ENCODE measurements at regions of chr19 and their contacts with region 1.

Region 1: GRCh38 chr19:41706741-41707501 is 1.5 kb upstream of the CEACAM5 start:
- DNase-seq: peak; percentile 84 to 85
- H3K4me3 ChIP-seq: peak overlapping the region; percentile 26
- H3K4me3 Mint-ChIP-seq: peak overlapping the region; percentile 66
- H3K27ac Mint-ChIP-seq: no peak overlapping the region
- H3K4me1 ChIP-seq: no peaks in the 10 kb centered on the region; the same call in 1 of the 2 replicates
- H3K4me1 Mint-ChIP-seq: peaks cover 13% of the 10 kb centered on the region
- H3K27me3 ChIP-seq: no peaks in the 10 kb centered on the region
- H3K27me3 Mint-ChIP-seq: peaks cover 5% of the 10 kb centered on the region
- CTCF ChIP-seq: peak; percentile 85 to 99

Region 2: DNA sequence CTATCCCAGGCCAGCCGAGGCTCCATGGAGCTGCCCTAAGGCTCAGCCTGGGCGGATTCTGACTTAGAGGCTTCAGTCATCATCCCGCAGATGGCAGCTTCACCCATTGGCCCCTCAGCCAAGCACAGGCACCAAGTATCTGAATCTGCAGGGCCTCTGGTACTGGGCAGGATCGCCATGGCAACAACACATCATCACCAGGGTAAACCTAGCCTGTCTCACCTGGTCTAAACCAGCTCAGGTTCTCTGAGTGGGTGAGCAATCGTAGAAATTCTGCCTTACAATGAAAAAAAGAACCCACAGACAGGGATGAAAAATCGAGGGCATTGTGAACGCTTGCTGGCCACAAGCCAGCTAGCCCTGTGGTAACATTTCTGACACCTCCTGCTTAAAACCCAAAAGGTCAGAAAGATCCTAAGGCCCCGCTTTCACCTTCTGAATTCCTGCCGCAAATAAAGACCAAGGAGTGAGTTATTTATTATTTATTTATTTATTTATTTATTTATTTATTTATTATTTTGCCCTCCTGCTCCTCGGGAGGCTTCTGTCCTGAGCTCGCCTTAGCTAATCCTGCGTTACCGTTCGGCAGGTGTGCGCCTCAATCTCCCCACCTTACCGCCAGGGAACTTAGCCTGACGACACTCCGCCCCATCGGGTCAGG is 142.9 kb before region 1 on chr19:
- CTCF ChIA-PET with region 1: no interaction called
- POLR2A ChIA-PET with region 1: no interaction called
- intact Hi-C with region 1: no loop called
- DNase-seq: no peak
- H3K4me3 ChIP-seq: no peak overlapping the region
- H3K4me3 Mint-ChIP-seq: no peak overlapping the region
- H3K27ac Mint-ChIP-seq: no peak overlapping the region
- H3K4me1 ChIP-seq: no peaks in the 10 kb centered on the region
- H3K4me1 Mint-ChIP-seq: no peaks in the 10 kb centered on the region
- H3K27me3 ChIP-seq: no peaks in the 10 kb centered on the region
- H3K27me3 Mint-ChIP-seq: peaks cover 22% of the 10 kb centered on the region
- CTCF ChIP-seq: no peak

Region 3: GRCh38 chr19:41641879-41642485 is 64.9 kb before region 1 on chr19:
- CTCF ChIA-PET with region 1: interaction called, 6 read pairs
- POLR2A ChIA-PET with region 1: no interaction called
- intact Hi-C with region 1: loop called (anchors 5 kb)
- DNase-seq: peak; percentile 64 to 78
- H3K4me3 ChIP-seq: no peak overlapping the region
- H3K4me3 Mint-ChIP-seq: no peak overlapping the region
- H3K27ac Mint-ChIP-seq: no peak overlapping the region
- H3K4me1 ChIP-seq: no peaks in the 10 kb centered on the region
- H3K4me1 Mint-ChIP-seq: no peaks in the 10 kb centered on the region
- H3K27me3 ChIP-seq: no peaks in the 10 kb centered on the region; the same call in 1 of the 2 replicates
- H3K27me3 Mint-ChIP-seq: peaks cover 3% of the 10 kb centered on the region
- CTCF ChIP-seq: peak; percentile 87 to 95

Region 4: DNA sequence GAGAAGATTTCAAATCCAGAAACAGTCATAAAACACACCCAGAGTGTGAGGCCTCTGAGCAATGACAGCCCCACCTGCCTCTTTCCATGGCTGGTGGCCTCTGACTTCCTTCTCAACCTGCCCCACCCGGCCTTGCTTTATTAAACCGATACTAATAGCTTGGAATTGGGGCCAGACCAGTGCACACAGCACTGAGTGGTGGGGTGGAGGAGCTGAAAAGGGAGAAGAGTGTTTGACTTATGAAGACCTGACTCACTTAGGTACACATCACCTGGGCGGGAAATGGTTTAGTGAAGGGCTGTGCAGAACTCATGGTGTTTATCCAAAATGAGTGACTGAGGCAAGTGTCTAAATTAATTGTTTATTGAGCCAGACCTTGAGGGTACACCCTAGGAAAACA is 27.7 kb after region 1 on chr19:
- CTCF ChIA-PET with region 1: interaction called, 24 read pairs
- POLR2A ChIA-PET with region 1: interaction called, 8 read pairs
- intact Hi-C with region 1: no loop called
- DNase-seq: peak; percentile 75 to 89
- H3K4me3 ChIP-seq: no peak overlapping the region
- H3K4me3 Mint-ChIP-seq: peak overlapping the region; percentile 42
- H3K27ac Mint-ChIP-seq: peak overlapping the region; percentile 77
- H3K4me1 ChIP-seq: peaks cover 32% of the 10 kb centered on the region
- H3K4me1 Mint-ChIP-seq: peaks cover 27% of the 10 kb centered on the region
- H3K27me3 ChIP-seq: no peaks in the 10 kb centered on the region
- H3K27me3 Mint-ChIP-seq: no peaks in the 10 kb centered on the region
- CTCF ChIP-seq: no peak

Region 5: DNA sequence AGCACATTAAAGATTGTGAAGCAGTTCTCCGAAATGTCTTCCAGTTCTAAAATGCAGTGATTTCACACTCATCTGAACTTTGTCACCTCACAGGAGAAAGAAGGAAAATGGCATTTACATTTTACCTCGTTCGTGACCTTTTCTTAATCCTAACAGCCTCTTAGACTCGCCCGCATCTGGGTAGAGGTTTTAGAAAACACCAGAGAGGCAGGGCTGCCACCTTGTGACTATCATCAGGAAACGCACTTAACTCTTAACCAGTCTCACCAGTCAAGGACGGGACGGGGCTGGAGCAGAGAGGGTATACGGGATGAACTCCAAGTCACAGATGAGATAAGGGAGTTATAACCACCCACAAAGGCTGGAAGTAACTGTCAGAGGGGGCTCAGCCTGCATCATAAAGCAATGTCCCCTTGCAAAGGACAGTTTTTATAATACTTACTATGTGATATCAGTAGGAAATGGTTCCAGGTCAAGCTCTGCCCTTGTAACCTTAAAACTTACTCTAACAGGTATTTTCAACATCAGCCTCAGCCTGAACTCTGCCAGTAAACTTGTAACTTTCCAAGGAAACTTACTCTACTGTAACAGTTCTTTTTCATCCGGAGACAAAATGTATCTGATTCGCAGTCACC is 39.8 kb after region 1 on chr19:
- CTCF ChIA-PET with region 1: interaction called, 38 read pairs
- POLR2A ChIA-PET with region 1: no interaction called
- intact Hi-C with region 1: loop called (anchors 1 kb)
- DNase-seq: peak; percentile 73 to 76
- H3K4me3 ChIP-seq: no peak overlapping the region
- H3K4me3 Mint-ChIP-seq: no peak overlapping the region
- H3K27ac Mint-ChIP-seq: no peak overlapping the region
- H3K4me1 ChIP-seq: peaks cover 15% of the 10 kb centered on the region; the same call in 1 of the 2 replicates
- H3K4me1 Mint-ChIP-seq: peaks cover 16% of the 10 kb centered on the region
- H3K27me3 ChIP-seq: no peaks in the 10 kb centered on the region
- H3K27me3 Mint-ChIP-seq: no peaks in the 10 kb centered on the region
- CTCF ChIP-seq: peak; percentile 85 to 90

Region 6: DNA sequence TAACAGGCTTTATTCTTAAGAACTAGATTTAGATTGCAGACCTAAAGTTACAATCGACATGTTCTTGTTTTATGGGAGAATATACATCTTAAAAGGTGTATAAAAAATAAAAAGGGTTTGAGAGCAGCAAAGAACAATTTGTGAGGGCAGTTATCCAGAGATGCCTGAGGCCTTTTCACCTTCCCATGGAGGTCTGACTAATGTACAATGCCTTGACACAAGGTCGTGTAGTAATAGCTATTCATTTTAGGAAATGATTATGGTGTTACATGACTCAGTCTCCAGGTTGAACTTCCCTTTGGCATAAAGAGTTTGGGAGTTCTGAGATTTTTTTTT is 68.4 kb after region 1 on chr19:
- CTCF ChIA-PET with region 1: interaction called, 10 read pairs
- POLR2A ChIA-PET with region 1: no interaction called
- intact Hi-C with region 1: no loop called
- DNase-seq: no peak
- H3K4me3 ChIP-seq: no peak overlapping the region
- H3K4me3 Mint-ChIP-seq: no peak overlapping the region
- H3K27ac Mint-ChIP-seq: peak overlapping the region; percentile 87
- H3K4me1 ChIP-seq: peaks cover 80% of the 10 kb centered on the region
- H3K4me1 Mint-ChIP-seq: peaks cover 49% of the 10 kb centered on the region
- H3K27me3 ChIP-seq: no peaks in the 10 kb centered on the region
- H3K27me3 Mint-ChIP-seq: no peaks in the 10 kb centered on the region
- CTCF ChIP-seq: no peak

Region 7: GRCh38 chr19:41785653-41786052 is 78.7 kb after region 1 on chr19:
- CTCF ChIA-PET with region 1: interaction called, 13 read pairs
- POLR2A ChIA-PET with region 1: no interaction called
- intact Hi-C with region 1: loop called (anchors 1 kb)
- DNase-seq: peak; percentile 79 to 84
- H3K4me3 ChIP-seq: no peak overlapping the region
- H3K4me3 Mint-ChIP-seq: no peak overlapping the region
- H3K27ac Mint-ChIP-seq: no peak overlapping the region
- H3K4me1 ChIP-seq: peaks cover 8% of the 10 kb centered on the region
- H3K4me1 Mint-ChIP-seq: peaks cover 18% of the 10 kb centered on the region
- H3K27me3 ChIP-seq: no peaks in the 10 kb centered on the region
- H3K27me3 Mint-ChIP-seq: no peaks in the 10 kb centered on the region
- CTCF ChIP-seq: peak; percentile 80 to 89

Measured in Caco-2 (cell line).